Activated T-helper 2 cell treated with anti-CD3 and anti-CD28 coated beads, Interferon-gamma antibody, Interleukin-2, Interleukin-4, amounts not matched to agents 10 μg/mL and 5 μg/mL and 100 μg/mL, durations not matched to agents 14 hours and 24 hours and 36 hours (primary cell): ENCODE measurements at regions of chr12 and their contacts with region 1.

Region 1: DNA sequence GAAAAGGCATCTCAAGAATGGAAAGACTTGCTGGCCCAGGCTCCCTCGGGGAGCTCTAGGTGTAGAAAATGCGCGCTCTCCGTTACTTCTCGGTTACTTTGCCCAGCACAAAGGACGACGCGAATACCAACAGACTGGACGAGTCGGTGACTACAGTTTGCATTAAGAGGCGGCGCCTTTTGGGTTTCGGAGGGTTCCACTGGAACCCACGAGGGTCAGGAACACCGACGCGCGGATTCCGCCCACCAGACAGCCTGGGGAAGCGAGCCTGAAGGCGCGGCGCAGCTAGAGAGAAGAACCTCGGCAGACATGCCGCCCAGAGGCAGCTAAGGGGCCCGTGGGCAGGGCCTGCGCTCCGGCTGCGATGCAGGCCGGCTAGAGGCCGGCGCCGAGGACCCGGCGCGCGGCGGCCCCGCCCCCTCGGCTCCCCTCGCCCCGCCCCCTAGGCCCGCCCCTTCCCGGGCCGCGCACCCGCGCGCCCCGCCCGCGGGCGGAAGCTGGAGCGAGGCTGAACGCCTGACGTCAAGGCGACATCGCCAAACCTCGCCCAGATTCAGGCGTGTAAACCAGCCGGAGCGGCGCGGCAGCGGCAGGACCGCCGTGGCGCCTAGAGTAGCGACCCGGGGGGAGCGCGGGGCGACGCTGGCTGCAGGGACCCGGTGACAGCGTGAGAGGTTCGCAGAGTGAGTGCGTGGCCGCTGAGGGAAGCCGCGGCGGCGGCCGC is at the start of gene RAP1B:
- DNase-seq: peak; percentile 88
- H3K4me3 Mint-ChIP-seq: peak within 1 kb of the TSS; percentile 94
- H3K27ac Mint-ChIP-seq: peak within 1 kb of the TSS; percentile 97
- H3K4me1 Mint-ChIP-seq: peaks cover 43% of the 10 kb centered on the region
- H3K27me3 Mint-ChIP-seq: no peaks in the 10 kb centered on the region
- total RNA-seq, gene RAP1B: 174 and 182 TPM in 2 replicates

Region 2: DNA sequence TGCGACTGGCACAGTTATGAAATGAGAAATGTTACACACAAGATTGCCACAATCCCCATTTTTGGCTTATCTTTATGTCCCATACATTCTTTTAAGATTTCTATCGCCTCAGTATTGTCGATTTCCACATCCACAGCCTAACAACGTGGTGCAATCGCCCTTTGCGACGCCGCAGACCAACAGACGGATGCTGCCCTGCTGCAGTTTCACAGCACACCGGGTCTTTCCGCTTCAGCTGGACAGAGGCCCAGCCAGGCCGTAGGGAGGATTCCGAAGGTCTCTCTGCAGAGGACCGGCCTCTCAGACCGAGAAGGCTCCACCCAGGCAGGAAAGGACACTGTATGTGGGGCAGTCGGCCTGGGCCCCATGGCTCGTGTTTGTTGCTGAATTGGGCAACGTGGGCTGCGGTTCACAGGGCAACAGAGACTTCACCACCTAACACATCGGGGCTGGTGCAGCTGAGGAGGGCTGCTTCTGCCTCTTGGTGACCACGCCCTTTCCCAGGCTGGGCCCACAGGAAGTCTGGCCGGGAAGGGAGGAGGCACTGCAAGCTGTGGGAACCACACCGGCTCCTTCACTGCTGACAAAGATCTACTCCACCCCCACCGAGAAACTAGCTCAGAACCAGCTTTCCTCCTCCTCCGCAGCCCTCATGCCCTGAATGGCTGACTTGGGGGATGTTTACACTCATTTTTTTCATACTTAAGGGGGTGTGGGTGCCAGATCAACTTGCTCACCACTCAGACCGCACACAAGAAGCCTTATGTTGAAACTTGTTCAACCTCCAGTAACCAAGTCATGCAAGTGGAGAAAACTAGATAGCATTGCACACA is 245.4 kb before region 1 on chr12:
- intact Hi-C with region 1: loop called (anchors 2 kb)
- DNase-seq: peak; percentile 85
- H3K4me3 Mint-ChIP-seq: peak overlapping the region; percentile 61
- H3K27ac Mint-ChIP-seq: peak overlapping the region; percentile 84
- H3K4me1 Mint-ChIP-seq: peaks cover 42% of the 10 kb centered on the region
- H3K27me3 Mint-ChIP-seq: no peaks in the 10 kb centered on the region

Region 3: GRCh38 chr12:68482660-68483059 is 127.9 kb before region 1 on chr12:
- intact Hi-C with region 1: loop called (anchors 2 kb)
- DNase-seq: peak; percentile 38
- H3K4me3 Mint-ChIP-seq: peak overlapping the region; percentile 9
- H3K27ac Mint-ChIP-seq: peak overlapping the region; percentile 93
- H3K4me1 Mint-ChIP-seq: peaks cover 42% of the 10 kb centered on the region
- H3K27me3 Mint-ChIP-seq: no peaks in the 10 kb centered on the region

Region 4: GRCh38 chr12:68587448-68587873 is 23.1 kb before region 1 on chr12:
- intact Hi-C with region 1: loop called (anchors 1 kb)
- DNase-seq: peak; percentile 40
- H3K4me3 Mint-ChIP-seq: no peak overlapping the region
- H3K27ac Mint-ChIP-seq: peak overlapping the region; percentile 76
- H3K4me1 Mint-ChIP-seq: peaks cover 27% of the 10 kb centered on the region
- H3K27me3 Mint-ChIP-seq: no peaks in the 10 kb centered on the region

Region 5: DNA sequence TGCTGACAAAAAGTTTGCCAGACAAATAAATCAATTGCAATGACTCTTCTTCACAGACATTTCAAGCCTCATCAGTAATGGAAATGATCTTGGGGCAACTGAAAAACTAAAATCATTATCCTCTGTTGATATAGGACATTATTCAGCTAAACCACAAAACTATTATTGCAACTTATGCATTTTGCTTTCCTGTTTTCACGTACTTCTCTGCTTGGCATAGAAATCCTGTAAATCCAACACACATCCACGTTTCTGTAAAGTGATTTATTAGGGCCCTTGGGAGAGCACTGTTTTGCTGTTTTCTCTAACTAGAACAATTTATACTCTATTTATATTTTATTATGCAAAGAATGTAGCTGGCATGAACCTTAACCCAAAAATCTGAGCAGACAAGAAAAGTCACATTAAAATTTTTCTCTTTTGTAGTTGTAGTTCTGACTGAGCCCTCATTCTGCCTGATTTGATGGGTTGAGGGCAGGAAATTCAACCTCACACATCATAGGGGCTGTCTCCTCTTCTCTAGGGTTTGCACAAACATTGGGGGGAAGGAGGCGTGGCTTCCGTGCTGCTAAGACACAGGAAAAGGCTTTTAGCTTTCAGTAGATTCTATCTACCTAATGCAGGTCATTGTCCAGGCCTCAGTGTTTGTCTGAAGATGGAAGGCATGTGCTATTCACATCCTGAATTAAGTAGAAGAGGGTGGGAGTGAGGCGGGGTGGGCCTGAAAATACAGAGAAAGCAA is 64.7 kb after region 1 on chr12:
- intact Hi-C with region 1: loop called (anchors 5 kb)
- DNase-seq: peak; percentile 59
- H3K4me3 Mint-ChIP-seq: peak overlapping the region; percentile 55
- H3K27ac Mint-ChIP-seq: peak overlapping the region; percentile 81
- H3K4me1 Mint-ChIP-seq: peaks cover 39% of the 10 kb centered on the region
- H3K27me3 Mint-ChIP-seq: no peaks in the 10 kb centered on the region

Region 6: GRCh38 chr12:68915055-68915454 is 304.5 kb after region 1 on chr12:
- intact Hi-C with region 1: loop called (anchors 10 kb)
- DNase-seq: no peak
- H3K4me3 Mint-ChIP-seq: no peak overlapping the region
- H3K27ac Mint-ChIP-seq: peak overlapping the region; percentile 79
- H3K4me1 Mint-ChIP-seq: peaks cover 36% of the 10 kb centered on the region
- H3K27me3 Mint-ChIP-seq: no peaks in the 10 kb centered on the region